ENCODE measurements at regions of chr1 and their contacts with region 1.

Region 1: GRCh38 chr1:208245185-208245705 is 1.1 kb upstream of the PLXNA2 start:
- DNase-seq: peak; percentile 57
- ATAC-seq: peak; percentile 74
- H3K4me3 ChIP-seq: peak overlapping the region in 1 of 2 experiments; percentile 50; a peak in 3 of 4 replicates
- H3K27ac ChIP-seq: no peak overlapping the region
- H3K4me1 ChIP-seq: peaks cover 11% of the 10 kb centered on the region
- H3K27me3 ChIP-seq: peaks cover 33% of the 10 kb centered on the region
- CTCF ChIP-seq: peak; percentile 85

Region 2: DNA sequence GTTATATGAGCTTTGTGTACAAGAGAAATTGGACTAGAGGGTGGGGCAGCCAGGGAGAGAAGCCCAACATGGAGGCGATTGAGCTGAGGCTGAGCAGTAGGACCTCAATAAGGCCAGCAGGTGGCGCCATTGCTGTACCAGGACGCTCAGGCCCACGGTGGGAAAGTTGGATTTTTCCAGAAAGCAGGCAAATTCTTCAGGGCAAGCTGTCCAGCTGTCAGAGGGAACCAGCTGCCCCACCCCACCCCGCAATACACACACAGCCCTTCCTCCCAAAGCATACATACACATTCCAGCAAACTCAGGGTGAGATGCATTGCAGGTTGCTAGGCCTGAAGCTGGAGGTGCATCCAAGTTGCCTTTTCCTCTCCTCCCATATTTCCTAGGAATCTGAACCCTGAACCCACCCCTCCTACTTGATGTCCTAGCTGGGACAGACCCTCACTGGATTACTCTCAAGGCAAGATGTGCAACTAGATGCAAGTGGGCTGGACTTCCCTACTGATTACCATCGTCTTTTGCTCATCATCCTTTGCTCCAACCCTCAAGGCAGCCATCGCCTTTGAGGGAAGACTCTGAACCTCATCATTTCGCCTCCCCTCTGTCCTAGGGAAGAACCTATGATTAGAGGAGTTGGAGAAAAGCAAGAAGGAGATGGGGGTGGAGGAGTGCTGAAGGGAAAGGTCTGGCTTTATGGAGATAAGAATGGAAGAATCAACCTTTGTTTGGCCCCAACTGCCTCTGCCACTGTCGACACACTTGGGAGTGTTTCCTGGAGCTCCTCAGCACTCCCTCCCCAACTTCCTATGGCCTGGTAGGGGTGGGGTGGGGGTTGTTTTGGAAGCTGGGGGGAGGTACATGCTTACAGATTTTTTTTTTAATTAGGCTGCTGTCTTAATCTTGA is 359.9 kb before region 1 on chr1:
- CTCF ChIA-PET with region 1: interaction called, 5 read pairs
- POLR2A ChIA-PET with region 1: no interaction called
- in situ Hi-C with region 1: no loop called
- intact Hi-C with region 1: loop called (anchors 5 kb)
- DNase-seq: peak; percentile 43
- ATAC-seq: peak; percentile 97
- H3K4me3 ChIP-seq: no peak overlapping the region
- H3K27ac ChIP-seq: no peak overlapping the region
- H3K4me1 ChIP-seq: no peaks in the 10 kb centered on the region
- H3K27me3 ChIP-seq: no peaks in the 10 kb centered on the region; the same call in 1 of the 2 replicates
- CTCF ChIP-seq: peak; percentile 95

Region 3: DNA sequence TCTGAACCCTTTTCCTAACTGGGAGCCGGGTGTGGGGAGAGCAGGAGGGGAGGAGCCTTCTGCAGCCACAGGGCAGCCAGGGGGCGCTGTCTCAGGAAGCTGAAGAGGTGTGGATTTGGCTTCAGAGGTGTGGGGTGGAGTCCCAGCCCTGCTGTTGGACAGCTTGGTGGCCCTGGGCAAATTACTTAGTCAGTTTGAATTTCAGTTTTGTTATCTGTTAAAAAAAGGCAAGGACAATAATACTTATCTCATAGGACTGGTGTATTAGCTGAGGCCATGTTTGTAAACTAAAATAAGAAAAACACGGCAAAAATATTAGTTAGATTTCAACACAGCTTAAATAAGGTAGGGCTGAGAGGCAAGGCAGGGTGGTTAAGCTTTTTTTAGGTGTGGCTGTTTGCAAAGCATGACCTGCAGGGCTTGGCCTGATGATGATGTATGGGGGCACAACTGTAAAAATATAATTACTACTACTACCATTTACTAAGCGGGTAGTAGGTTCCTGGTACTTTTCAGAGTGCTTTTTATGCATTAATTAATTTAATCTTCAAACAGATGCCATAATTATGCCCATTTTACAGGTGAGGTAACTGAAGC is 112.9 kb before region 1 on chr1:
- CTCF ChIA-PET with region 1: interaction called, 3 read pairs
- POLR2A ChIA-PET with region 1: no interaction called
- in situ Hi-C with region 1: no loop called
- intact Hi-C with region 1: loop called (anchors 5 kb)
- DNase-seq: no peak
- ATAC-seq: peak; percentile 90
- H3K4me3 ChIP-seq: no peak overlapping the region
- H3K27ac ChIP-seq: no peak overlapping the region
- H3K4me1 ChIP-seq: no peaks in the 10 kb centered on the region
- H3K27me3 ChIP-seq: no peaks in the 10 kb centered on the region; the same call in 1 of the 2 replicates
- CTCF ChIP-seq: peak; percentile 84

Measured in Panc1 (cell line).